IMR-90 (cell line): ENCODE measurements at regions of chr12 and their contacts with region 1.

Region 1: GRCh38 chr12:55142669-55143565 is 16.7 kb downstream of the OR9K2 start:
- DNase-seq: peak; percentile 38
- ATAC-seq: 0 out of 2 replicates have a peak, but pooled peaks have one; percentile 24
- H3K4me3 ChIP-seq: no peak overlapping the region
- H3K27ac ChIP-seq: no peak overlapping the region
- H3K4me1 ChIP-seq: no peaks in the 10 kb centered on the region
- H3K27me3 ChIP-seq: no peaks in the 10 kb centered on the region
- CTCF ChIP-seq: peak; percentile 58
- POLR2A ChIP-seq: no peak
- RAD21 ChIP-seq: peak; percentile 23; the same call in 1 of the 2 replicates

Region 2: GRCh38 chr12:54993161-54993835 is 149.6 kb before region 1 on chr12:
- CTCF ChIA-PET with region 1: interaction called, 4 read pairs
- POLR2A ChIA-PET with region 1: no interaction called
- dilution Hi-C with region 1: no loop called
- in situ Hi-C with region 1: no loop called
- intact Hi-C with region 1: loop called (anchors 1 kb)
- DNase-seq: peak; percentile 60
- ATAC-seq: peak; percentile 96
- H3K4me3 ChIP-seq: no peak overlapping the region
- H3K27ac ChIP-seq: no peak overlapping the region
- H3K4me1 ChIP-seq: no peaks in the 10 kb centered on the region
- H3K27me3 ChIP-seq: no peaks in the 10 kb centered on the region
- CTCF ChIP-seq: peak; percentile 76
- POLR2A ChIP-seq: no peak
- RAD21 ChIP-seq: peak; percentile 74